Activated CD4-positive, alpha-beta memory T cell treated with anti-CD3 and anti-CD28 coated beads, Interleukin-2, amount 10 ng/mL, durations not matched to agents 7 days and 5 days (primary cell): ENCODE measurements at regions of chr4 and their contacts with region 1.

Region 1: DNA sequence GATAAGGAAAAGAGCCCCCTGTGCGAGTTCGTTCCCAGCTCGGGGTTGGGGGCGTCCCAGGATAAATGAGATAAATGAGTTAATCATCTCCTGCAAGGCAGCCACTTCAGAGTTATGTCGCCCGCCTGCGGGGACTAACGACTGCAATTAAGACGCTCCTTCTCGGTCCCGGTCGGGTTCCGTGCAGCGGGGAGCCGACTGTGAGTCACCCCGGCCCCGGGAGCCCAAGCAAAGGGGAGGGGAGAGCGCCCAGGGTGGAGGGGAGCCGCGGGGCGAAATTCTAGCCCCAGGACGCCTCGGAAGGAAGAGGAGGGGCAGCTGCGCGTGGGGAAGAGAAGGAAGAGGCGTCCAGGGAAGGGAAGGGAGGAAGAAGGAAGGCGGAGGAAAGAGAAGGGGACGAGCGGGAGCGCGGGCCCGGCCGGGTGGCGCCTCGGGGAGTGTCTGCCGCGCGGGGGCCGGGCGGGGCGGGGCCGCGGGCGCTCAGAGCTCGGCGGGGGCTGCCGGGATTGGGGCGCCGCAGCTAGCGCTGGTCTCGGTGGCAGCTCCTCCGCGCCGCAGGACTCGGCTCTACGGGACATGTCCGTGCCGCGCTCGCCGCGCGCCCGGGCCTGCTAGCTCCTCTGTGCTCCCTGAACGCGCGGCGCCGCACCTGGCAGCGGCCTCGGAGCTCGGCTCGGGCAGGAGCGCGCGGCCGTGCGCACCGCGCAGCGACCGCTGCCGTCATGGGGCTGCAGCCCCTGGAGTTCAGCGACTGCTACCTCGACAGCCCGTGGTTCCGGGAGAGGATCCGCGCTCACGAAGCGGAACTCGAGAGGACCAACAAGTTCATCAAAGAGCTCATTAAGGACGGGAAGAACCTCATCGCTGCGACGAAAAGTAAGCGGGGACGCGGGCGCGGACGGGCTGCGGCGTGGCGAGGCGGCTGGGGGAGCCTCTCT is at the start of gene ARHGAP10:
- DNase-seq: peak; percentile 71
- H3K4me3 Mint-ChIP-seq: peak within 1 kb of the TSS; percentile 95
- H3K27ac Mint-ChIP-seq: peak within 1 kb of the TSS; percentile 91
- H3K4me1 Mint-ChIP-seq: peaks cover 55% of the 10 kb centered on the region
- H3K27me3 Mint-ChIP-seq: peaks cover 12% of the 10 kb centered on the region
- total RNA-seq, gene ARHGAP10: 19.7 to 22.2 TPM

Region 2: GRCh38 chr4:147550626-147551250 is 181.1 kb before region 1 on chr4:
- CTCF ChIA-PET with region 1: no interaction called
- POLR2A ChIA-PET with region 1: no interaction called
- DNase-seq: no peak
- H3K4me3 Mint-ChIP-seq: peak overlapping the region; percentile 3
- H3K27ac Mint-ChIP-seq: no peak overlapping the region
- H3K4me1 Mint-ChIP-seq: peaks cover 14% of the 10 kb centered on the region
- H3K27me3 Mint-ChIP-seq: peaks cover 8% of the 10 kb centered on the region

Region 3: DNA sequence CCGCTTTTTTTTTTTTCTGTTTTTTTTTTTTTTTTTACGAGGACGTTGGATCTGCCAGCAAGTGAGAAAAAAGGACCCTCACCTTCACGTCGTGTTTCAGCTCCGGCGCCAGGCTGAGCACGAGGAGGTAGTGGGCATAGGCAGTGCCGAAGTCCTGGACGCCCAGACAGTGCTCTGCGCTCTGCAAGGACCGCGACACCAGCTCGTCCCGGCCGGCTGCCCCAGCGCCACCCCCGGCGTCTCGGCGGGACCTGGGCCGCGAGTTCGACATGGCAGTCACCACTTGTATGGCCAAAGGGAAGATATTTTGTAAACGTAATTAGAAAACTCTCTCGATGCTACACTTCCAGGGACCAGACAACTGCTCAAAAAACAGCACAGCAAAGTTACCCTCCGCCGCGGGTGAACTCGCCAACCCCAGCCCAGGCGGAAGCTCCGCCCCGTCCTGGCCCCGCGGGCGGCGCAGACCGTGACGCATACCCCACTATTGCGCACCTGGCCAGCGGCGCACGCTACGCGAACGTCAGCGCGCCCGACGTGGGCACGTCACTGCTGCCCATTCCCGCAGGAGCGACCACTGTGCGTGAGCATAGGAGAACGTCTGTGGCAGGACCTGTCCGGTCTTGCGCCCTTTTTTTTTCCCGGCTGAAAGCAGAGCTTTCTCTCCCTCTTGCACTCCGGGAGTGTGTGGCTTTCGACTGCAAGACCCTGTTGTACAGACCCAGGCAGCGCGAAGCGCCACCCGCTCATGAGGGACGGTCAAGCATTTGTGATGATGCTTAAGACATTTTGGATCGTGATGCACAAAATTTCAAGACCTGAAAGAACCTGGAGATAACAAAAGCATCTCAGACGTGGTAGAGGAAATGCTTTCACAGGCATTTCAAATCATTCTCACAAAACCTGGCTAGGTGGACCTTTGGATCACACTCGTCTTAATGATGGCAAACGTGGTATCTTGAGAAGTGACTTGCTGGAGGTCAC is 47.8 kb before region 1 on chr4 and contains the start of gene PRMT9:
- CTCF ChIA-PET with region 1: interaction called, 3 read pairs
- POLR2A ChIA-PET with region 1: interaction called, 56 read pairs
- DNase-seq: peak; percentile 91
- H3K4me3 Mint-ChIP-seq: peak within 1 kb of the TSS; percentile 89
- H3K27ac Mint-ChIP-seq: peak within 1 kb of the TSS; percentile 83
- H3K4me1 Mint-ChIP-seq: peaks cover 46% of the 10 kb centered on the region
- H3K27me3 Mint-ChIP-seq: peaks cover 7% of the 10 kb centered on the region
- total RNA-seq, gene PRMT9: 11.0 to 12.0 TPM

Region 4: DNA sequence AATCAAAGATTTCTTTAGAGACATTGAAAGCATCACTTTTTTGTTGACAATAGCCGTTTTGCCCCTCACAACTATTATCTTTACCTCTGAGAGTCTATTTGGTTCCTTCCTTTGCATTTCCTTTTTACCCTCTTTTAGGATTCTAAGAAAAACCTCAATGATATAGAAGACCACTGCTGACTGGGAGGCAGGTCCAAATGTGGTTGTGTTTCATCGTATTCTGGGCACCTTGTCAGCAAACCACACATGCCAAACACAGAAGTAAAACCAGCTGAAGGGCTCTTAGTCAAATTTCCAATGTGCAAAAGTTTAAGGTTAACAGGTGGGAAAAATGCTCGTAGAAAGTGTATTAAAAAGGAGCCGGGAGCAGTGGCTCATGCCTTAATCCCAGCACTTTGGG is 42.8 kb before region 1 on chr4:
- CTCF ChIA-PET with region 1: interaction called, 3 read pairs
- POLR2A ChIA-PET with region 1: interaction called, 56 read pairs
- DNase-seq: peak; percentile 59
- H3K4me3 Mint-ChIP-seq: peak overlapping the region; percentile 38
- H3K27ac Mint-ChIP-seq: peak overlapping the region; percentile 89
- H3K4me1 Mint-ChIP-seq: peaks cover 34% of the 10 kb centered on the region
- H3K27me3 Mint-ChIP-seq: peaks cover 11% of the 10 kb centered on the region

Region 5: GRCh38 chr4:147793569-147794313 is 61.9 kb after region 1 on chr4:
- CTCF ChIA-PET with region 1: interaction called, 10 read pairs
- POLR2A ChIA-PET with region 1: interaction called, 27 read pairs
- DNase-seq: peak; percentile 38
- H3K4me3 Mint-ChIP-seq: peak overlapping the region; percentile 5
- H3K27ac Mint-ChIP-seq: peak overlapping the region; percentile 59
- H3K4me1 Mint-ChIP-seq: peaks cover 53% of the 10 kb centered on the region
- H3K27me3 Mint-ChIP-seq: no peaks in the 10 kb centered on the region

Region 6: DNA sequence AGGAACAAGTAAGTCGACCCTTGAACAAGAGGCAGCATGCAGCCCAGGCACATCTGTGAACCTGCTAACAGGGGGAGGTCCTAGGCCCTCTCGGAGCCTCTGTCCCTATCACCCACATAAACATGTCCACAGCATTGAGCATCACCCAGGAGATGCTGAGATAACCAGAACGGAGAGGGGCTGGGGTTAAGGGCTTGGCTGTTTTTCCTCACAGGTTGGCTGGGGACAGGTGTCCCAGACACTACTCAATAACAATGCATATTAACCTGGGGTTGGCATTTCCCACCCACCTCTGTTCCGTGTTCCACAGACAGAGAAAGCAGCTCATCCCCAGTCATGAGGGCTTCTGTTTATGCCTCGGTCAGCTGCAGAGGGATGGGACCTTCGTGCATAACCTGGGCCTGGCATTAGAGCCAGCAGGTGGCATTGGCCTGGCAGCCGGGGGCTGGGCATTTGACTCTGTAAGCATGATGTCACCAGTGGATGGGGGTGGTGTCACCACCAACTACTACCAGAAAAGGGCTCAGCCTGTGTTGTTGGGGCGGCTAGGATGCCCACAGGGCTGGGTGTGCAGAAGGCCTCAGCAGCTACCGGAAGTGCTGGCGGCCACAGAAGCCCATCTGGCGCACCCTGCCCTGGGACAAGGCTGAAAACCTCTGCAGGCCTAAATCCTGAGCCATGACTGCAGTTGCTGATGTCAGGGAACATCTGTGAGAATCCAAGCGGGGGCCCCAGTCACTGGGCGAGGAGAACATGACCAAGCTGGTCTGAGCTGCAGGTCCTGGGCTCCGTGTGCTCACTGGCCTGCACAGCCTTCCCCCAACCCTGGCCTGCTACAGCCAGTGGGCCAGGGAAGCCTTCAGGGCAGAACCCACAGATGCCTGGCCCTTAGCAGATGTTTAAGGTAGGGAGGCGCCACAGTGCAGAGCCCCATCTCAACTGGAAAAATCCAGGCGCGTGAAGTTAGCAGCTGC is 358.9 kb after region 1 on chr4:
- CTCF ChIA-PET with region 1: no interaction called
- POLR2A ChIA-PET with region 1: no interaction called
- DNase-seq: no peak
- H3K4me3 Mint-ChIP-seq: no peak overlapping the region
- H3K27ac Mint-ChIP-seq: no peak overlapping the region
- H3K4me1 Mint-ChIP-seq: peaks cover 3% of the 10 kb centered on the region
- H3K27me3 Mint-ChIP-seq: no peaks in the 10 kb centered on the region